CD4-positive, alpha-beta T cell (primary cell): ENCODE measurements at regions of chr3 and their contacts with region 1.

Region 1: GRCh38 chr3:17894434-17895060 is 152.1 kb upstream of the TBC1D5 start:
- DNase-seq: peak in 10 of 14 experiments; percentile 6 to 42 (median 26)
- ATAC-seq: peak; percentile 39
- H3K4me3 ChIP-seq: no peak overlapping the region
- H3K4me3 Mint-ChIP-seq: no peak overlapping the region
- H3K27ac ChIP-seq: no peak overlapping the region
- H3K27ac Mint-ChIP-seq: no peak overlapping the region
- H3K4me1 ChIP-seq: no peaks in the 10 kb centered on the region
- H3K4me1 Mint-ChIP-seq: no peaks in the 10 kb centered on the region
- H3K27me3 ChIP-seq: no peaks in the 10 kb centered on the region
- H3K27me3 Mint-ChIP-seq: no peaks in the 10 kb centered on the region
- CTCF ChIP-seq: no peak

Region 2: DNA sequence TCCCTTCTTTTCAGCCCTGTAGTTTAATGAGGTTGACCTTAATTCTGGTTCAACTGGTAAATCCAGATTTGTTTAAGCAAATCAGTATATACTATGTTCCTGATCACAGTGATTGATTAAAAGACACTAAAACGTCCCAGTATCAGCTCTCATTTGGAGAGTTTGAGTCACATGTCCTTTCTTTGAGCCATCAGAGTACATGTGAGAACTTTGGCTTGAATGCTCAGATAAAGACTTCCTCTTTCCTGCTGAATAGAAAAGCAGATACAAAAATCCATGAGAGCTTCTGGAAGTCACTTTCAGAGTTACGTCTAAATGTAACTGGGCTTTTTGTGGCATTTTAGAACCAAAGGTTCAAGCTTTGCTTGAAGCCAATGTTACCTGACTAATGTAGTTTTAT is 872.4 kb after region 1 on chr3:
- CTCF ChIA-PET with region 1: no interaction called
- POLR2A ChIA-PET with region 1: no interaction called
- intact Hi-C with region 1: loop called in 1 of 2 experiments (anchors 10 kb)
- DNase-seq: no peak
- ATAC-seq: no peak
- H3K4me3 ChIP-seq: no peak overlapping the region
- H3K4me3 Mint-ChIP-seq: no peak overlapping the region
- H3K27ac ChIP-seq: no peak overlapping the region
- H3K27ac Mint-ChIP-seq: peak overlapping the region; percentile 42
- H3K4me1 ChIP-seq: no peaks in the 10 kb centered on the region
- H3K4me1 Mint-ChIP-seq: peaks cover 33% of the 10 kb centered on the region
- H3K27me3 ChIP-seq: no peaks in the 10 kb centered on the region
- H3K27me3 Mint-ChIP-seq: no peaks in the 10 kb centered on the region
- CTCF ChIP-seq: no peak